Activated T-helper 1 cell treated with anti-CD3 and anti-CD28 coated beads, Interleukin-12 subunit alpha, Interleukin-12 subunit beta, Interleukin-2, Interleukin-4 antibody, amounts not matched to agents 30 ng/mL and 10 ng/mL and 1 ng/mL, durations not matched to agents 14 hours and 24 hours and 36 hours (primary cell): ENCODE measurements at regions of chr16 and their contacts with region 1.

Region 1: GRCh38 chr16:3787924-3788661 is 70.8 kb upstream of the TRAP1 start:
- DNase-seq: no peak
- H3K4me3 Mint-ChIP-seq: no peak overlapping the region
- H3K27ac Mint-ChIP-seq: peak overlapping the region; percentile 13
- H3K4me1 Mint-ChIP-seq: peaks cover 42% of the 10 kb centered on the region
- H3K27me3 Mint-ChIP-seq: peaks cover 3% of the 10 kb centered on the region

Region 2: DNA sequence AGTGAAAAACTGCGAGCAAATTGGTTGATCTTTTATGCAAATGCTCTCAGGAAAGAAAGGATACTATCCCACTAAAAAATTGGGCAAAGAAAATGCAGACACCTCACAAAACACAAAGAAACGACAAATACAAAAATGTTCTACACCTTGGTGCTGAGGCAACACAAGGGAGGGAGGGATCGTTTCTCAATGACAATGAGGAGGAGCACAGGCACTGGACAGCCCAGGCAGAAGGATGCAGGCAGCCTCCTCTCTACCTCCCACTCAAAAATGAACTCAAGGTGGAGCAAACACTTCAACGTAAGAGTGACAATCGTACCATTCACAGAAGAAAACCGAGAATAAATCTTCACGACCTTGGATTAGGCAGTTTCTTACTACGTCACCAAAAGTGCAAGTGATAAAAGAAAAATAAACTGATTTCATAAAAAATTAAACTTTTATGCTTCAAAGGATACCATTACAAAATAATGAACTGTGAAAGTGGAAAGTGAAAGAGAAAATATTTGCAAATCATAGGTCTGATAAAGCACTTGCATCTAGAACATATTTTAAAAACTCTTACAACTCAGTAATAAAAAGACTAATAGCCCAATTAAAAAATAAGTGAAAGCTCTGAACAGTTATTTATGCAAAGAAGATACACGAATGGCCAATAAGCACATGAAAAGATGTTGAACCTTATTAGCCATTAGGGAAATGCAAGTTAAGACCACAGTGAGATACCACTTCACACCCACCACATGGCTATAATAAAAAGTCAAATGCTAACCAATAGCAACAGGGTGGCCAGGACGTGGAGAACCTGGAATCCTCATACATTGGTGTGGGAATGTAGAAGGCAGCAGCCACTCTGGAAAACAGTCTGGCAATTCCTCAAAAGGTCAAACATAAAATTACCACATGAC is 10.1 kb after region 1 on chr16:
- intact Hi-C with region 1: loop called (anchors 1 kb)
- DNase-seq: no peak
- H3K4me3 Mint-ChIP-seq: peak overlapping the region; percentile 42
- H3K27ac Mint-ChIP-seq: no peak overlapping the region
- H3K4me1 Mint-ChIP-seq: peaks cover 60% of the 10 kb centered on the region
- H3K27me3 Mint-ChIP-seq: peaks cover 5% of the 10 kb centered on the region

Region 3: GRCh38 chr16:3807425-3808123 is 19.5 kb after region 1 on chr16:
- intact Hi-C with region 1: loop called (anchors 1 kb)
- DNase-seq: no peak
- H3K4me3 Mint-ChIP-seq: peak overlapping the region; percentile 31
- H3K27ac Mint-ChIP-seq: peak overlapping the region; percentile 64
- H3K4me1 Mint-ChIP-seq: peaks cover 79% of the 10 kb centered on the region
- H3K27me3 Mint-ChIP-seq: no peaks in the 10 kb centered on the region

Region 4: DNA sequence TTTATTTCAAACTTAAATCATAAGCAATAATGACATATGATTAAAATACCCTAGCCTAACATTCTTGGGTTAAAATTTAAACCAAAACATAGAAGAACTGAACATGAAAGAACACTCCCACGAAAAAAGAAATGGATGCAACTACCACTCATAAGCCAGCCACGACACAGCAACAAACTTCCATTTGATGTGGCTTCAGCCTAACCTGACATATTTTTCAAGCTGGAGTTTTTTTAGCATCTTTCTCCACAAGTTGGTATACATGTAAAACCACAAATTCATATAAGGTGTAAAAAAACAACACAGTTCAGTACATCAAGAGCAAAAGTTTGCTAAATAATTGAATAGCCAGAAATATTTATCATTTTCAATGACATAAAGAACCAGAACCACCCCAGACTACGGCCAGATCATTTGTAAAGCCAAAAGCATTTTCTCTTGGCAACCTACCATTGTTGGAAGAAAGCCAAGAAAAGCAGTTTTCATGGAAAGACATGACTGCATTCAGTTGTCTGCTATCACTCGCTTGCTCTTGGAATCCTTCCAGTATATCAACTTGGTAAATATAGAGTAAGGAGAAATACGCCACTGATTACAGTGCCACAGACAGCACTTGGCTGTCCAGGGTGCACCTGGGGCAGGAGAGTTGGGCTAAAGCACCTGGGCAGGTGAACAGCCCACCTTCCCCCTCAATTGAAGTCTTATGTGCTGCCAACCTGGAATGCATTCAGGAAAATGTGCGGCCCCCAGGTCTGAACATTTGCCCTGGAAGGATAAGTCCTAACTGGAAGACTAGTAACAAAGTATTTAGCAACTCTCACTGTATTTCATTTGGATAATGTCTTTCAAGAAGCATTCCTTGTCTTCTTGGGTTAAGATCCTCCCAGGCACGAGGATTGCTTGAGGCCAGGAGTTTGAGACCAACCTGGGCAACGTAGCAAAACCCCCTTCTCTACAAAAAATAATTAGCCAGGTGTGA is 31.9 kb after region 1 on chr16:
- intact Hi-C with region 1: loop called (anchors 5 kb)
- DNase-seq: no peak
- H3K4me3 Mint-ChIP-seq: no peak overlapping the region
- H3K27ac Mint-ChIP-seq: no peak overlapping the region
- H3K4me1 Mint-ChIP-seq: peaks cover 74% of the 10 kb centered on the region
- H3K27me3 Mint-ChIP-seq: no peaks in the 10 kb centered on the region

Region 5: GRCh38 chr16:3857189-3858043 is 69.3 kb after region 1 on chr16:
- intact Hi-C with region 1: loop called (anchors 1 kb)
- DNase-seq: no peak
- H3K4me3 Mint-ChIP-seq: no peak overlapping the region
- H3K27ac Mint-ChIP-seq: no peak overlapping the region
- H3K4me1 Mint-ChIP-seq: peaks cover 46% of the 10 kb centered on the region
- H3K27me3 Mint-ChIP-seq: no peaks in the 10 kb centered on the region